T-cell (primary cell): ENCODE measurements at regions of chr5 and their contacts with region 1.

Region 1: GRCh38 chr5:128201065-128201926 is 117.7 kb downstream of the SLC12A2 start:
- DNase-seq: peak; percentile 58 to 88 (median 79)
- ATAC-seq: peak; percentile 70 to 92 (median 90)
- H3K4me3 ChIP-seq: peak overlapping the region in 1 of 2 donors; percentile 30
- H3K4me3 Mint-ChIP-seq: peak overlapping the region in 1 of 3 donors; percentile 38
- H3K27ac ChIP-seq: no peak overlapping the region
- H3K27ac Mint-ChIP-seq: no peak overlapping the region
- H3K4me1 ChIP-seq: peaks cover 20 to 21% of the 10 kb centered on the region in 2 experiments
- H3K4me1 Mint-ChIP-seq: peaks cover 29 to 34% (median 34%) of the 10 kb centered on the region in 3 donors
- H3K27me3 ChIP-seq: peaks cover 0 to 5% of the 10 kb centered on the region in 2 experiments
- H3K27me3 Mint-ChIP-seq: peaks cover 0 to 2% of the 10 kb centered on the region in 2 donors

Region 2: GRCh38 chr5:127564002-127564769 is 637.1 kb before region 1 on chr5:
- CTCF ChIA-PET with region 1: interaction called, 3 to 10 read pairs
- POLR2A ChIA-PET with region 1: no interaction called
- DNase-seq: peak in 29 of 35 experiments; percentile 2 to 78 (median 33)
- ATAC-seq: peak; percentile 54 to 80 (median 63)
- H3K4me3 ChIP-seq: no peak overlapping the region
- H3K4me3 Mint-ChIP-seq: no peak overlapping the region
- H3K27ac ChIP-seq: no peak overlapping the region
- H3K27ac Mint-ChIP-seq: no peak overlapping the region
- H3K4me1 ChIP-seq: no peaks in the 10 kb centered on the region
- H3K4me1 Mint-ChIP-seq: peaks cover 0 to 7% (median 3%) of the 10 kb centered on the region in 3 donors
- H3K27me3 ChIP-seq: no peaks in the 10 kb centered on the region
- H3K27me3 Mint-ChIP-seq: peaks cover 7 to 12% of the 10 kb centered on the region in 2 donors

Region 3: DNA sequence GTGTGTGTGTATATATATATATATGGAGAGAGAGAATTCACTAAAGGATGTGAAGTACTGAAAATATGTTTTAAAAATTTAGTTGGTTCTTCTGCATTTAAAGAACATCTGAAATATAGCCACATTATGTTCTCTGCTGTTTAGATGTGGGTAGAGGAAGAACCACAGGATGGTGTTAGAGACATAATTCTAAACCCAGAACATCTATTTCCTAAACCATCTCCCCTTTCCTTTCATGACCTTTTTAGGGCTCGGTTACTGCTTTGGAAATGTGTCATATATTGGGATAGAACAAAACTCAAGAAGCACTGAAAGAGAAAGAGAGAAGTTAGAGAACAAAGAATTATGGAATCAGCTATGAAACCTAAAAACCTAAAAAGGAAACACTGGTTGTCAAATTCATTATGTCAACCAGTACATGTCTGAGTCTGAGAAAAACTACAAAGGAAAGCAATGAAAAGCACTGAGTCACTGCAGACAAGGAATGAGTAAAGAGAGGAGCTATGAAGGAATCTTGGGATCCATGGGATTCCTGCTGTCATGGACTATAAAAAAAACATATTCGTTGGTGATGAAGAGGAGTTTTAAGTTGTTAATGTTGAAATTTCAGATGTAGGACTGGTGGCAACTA is 89.4 kb before region 1 on chr5:
- CTCF ChIA-PET with region 1: no interaction called
- POLR2A ChIA-PET with region 1: no interaction called
- DNase-seq: no peak
- ATAC-seq: peak in 1 of 4 experiments; percentile 39
- H3K4me3 ChIP-seq: no peak overlapping the region
- H3K4me3 Mint-ChIP-seq: no peak overlapping the region
- H3K27ac ChIP-seq: no peak overlapping the region
- H3K27ac Mint-ChIP-seq: no peak overlapping the region
- H3K4me1 ChIP-seq: peaks cover 0 to 4% of the 10 kb centered on the region in 2 experiments
- H3K4me1 Mint-ChIP-seq: peaks cover 5% of the 10 kb centered on the region in 3 donors
- H3K27me3 ChIP-seq: no peaks in the 10 kb centered on the region
- H3K27me3 Mint-ChIP-seq: no peaks in the 10 kb centered on the region